Pancreas (tissue), 10 donors: ENCODE measurements at regions of chr13 and their contacts with region 1.

Region 1: GRCh38 chr13:45464687-45465453 is at the start of gene COG3:
- DNase-seq: peak; percentile 94 to 96 (median 95)
- ATAC-seq: peak; percentile 96 to 99 (median 98)
- H3K4me3 ChIP-seq: peak within 1 kb of the TSS; percentile 61 to 94 (median 88)
- H3K27ac ChIP-seq: peak within 1 kb of the TSS; percentile 82 to 95 (median 88)
- H3K4me1 ChIP-seq: peaks cover 23 to 41% (median 28%) of the 10 kb centered on the region in 3 donors
- H3K27me3 ChIP-seq: no peaks in the 10 kb centered on the region
- CTCF ChIP-seq: peak in 3 of 4 donors; percentile 13 to 43 (median 31)
- total RNA-seq, gene COG3: 16.4 to 19.9 (median 18.7) TPM

Region 2: DNA sequence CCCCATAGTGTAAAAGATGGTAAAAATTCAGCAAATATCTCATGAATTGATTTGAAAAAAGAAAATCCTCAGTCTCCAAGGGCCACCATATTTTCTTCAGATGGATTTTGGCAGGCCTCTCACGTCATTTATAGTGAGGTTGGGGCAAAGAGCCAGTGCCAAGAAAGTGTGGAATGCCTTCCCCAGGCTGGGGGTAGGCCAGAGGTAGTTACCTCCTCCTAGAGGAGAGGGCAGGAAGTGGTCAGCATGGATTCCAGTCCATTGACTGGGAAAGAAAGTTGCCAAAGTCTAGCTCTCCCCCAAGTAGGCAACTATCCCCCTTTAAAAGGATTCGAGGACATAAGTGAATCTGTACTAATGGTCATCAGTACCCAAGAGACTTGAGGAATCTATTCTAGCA is 195.7 kb before region 1 on chr13:
- intact Hi-C with region 1: no loop called
- DNase-seq: no peak
- ATAC-seq: no peak
- H3K4me3 ChIP-seq: no peak overlapping the region
- H3K27ac ChIP-seq: no peak overlapping the region
- H3K4me1 ChIP-seq: no peaks in the 10 kb centered on the region
- H3K27me3 ChIP-seq: no peaks in the 10 kb centered on the region
- CTCF ChIP-seq: no peak

Region 3: DNA sequence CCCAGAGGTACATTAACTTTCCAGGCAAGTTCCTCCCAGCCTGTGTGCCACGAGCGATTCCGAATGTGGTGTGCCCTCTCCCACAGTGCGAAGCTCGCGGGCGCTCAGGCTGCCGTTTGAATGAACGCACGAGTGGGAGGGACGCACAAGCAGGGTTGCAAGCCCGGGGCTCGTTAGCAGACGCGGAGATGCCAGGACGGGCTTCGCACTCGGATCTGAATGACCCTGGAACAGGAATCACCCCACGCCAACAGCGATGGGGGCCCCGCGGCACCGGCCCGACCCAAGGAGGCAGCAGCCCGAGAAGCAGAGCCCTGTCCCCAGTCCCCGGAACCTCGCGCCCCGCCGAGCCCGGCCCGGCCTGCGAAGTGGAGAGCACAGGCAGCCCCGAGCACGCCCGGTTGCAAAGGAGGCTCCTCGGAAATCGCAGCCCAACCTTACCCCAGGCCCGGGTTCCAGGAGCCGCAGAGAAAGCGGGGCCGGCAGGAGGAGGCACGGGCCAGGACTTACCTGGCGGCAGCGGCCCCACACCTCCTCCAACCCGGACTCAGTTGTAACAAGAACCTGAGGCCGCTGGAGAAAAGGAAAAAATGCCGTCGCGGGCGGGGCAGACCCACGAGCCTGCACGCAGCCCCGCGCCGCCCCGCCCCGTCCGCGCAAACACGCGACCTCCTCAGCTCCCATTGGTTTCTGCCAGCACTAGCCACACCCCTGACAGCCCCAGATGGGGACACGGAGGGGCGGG is 46.9 kb before region 1 on chr13 and contains the start of gene SLC25A30:
- intact Hi-C with region 1: loop called in 1 of 3 experiments (anchors 10 kb)
- DNase-seq: peak; percentile 90 to 97 (median 92)
- ATAC-seq: peak; percentile 85 to 95 (median 90)
- H3K4me3 ChIP-seq: peak within 1 kb of the TSS; percentile 59 to 86 (median 73)
- H3K27ac ChIP-seq: peak within 1 kb of the TSS; percentile 77 to 93 (median 85)
- H3K4me1 ChIP-seq: peaks cover 0 to 23% (median 11%) of the 10 kb centered on the region in 3 donors
- H3K27me3 ChIP-seq: no peaks in the 10 kb centered on the region
- CTCF ChIP-seq: no peak
- total RNA-seq, gene SLC25A30: 4.5 to 12.3 (median 8.3) TPM

Region 4: GRCh38 chr13:45592758-45593157 is 127.9 kb after region 1 on chr13:
- intact Hi-C with region 1: no loop called
- DNase-seq: no peak
- ATAC-seq: no peak
- H3K4me3 ChIP-seq: no peak overlapping the region
- H3K27ac ChIP-seq: no peak overlapping the region
- H3K4me1 ChIP-seq: no peaks in the 10 kb centered on the region
- H3K27me3 ChIP-seq: no peaks in the 10 kb centered on the region
- CTCF ChIP-seq: no peak

Region 5: GRCh38 chr13:45718063-45718462 is 253.2 kb after region 1 on chr13:
- intact Hi-C with region 1: no loop called
- DNase-seq: no peak
- ATAC-seq: peak in 3 of 4 donors; percentile 55 to 82 (median 77)
- H3K4me3 ChIP-seq: no peak overlapping the region
- H3K27ac ChIP-seq: no peak overlapping the region
- H3K4me1 ChIP-seq: peaks cover 10 to 12% (median 12%) of the 10 kb centered on the region in 3 donors
- H3K27me3 ChIP-seq: no peaks in the 10 kb centered on the region
- CTCF ChIP-seq: peak in 2 of 4 donors; percentile 12 to 13